ENCODE measurements at regions of chr12 and their contacts with region 1.

Region 1: DNA sequence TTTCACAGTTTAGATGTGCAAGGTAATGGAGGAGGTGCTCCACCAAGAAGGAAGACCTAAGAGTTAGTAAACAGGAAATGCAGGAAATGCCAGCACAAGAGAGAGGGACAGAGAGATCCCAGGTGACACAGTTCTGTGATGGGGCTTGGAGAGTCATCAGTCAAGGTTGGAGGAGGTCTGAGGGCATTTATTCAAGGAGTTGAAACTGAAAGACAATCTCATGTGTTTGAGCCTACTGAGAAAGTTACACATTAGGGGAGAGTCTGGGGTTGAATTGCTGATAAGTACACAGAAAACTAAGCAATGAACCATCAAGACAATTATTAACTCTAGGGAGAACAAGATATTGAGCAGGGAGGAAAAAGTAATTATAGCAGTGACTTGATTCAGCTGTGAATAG is 138.5 kb downstream of the ANO6 start:
- DNase-seq: no peak
- H3K4me3 ChIP-seq: no peak overlapping the region
- H3K27ac ChIP-seq: peak overlapping the region in 1 of 2 donors; percentile 15
- H3K4me1 ChIP-seq: peaks cover 6 to 37% of the 10 kb centered on the region in 2 donors
- H3K27me3 ChIP-seq: no peaks in the 10 kb centered on the region
- CTCF ChIP-seq: no peak

Region 2: DNA sequence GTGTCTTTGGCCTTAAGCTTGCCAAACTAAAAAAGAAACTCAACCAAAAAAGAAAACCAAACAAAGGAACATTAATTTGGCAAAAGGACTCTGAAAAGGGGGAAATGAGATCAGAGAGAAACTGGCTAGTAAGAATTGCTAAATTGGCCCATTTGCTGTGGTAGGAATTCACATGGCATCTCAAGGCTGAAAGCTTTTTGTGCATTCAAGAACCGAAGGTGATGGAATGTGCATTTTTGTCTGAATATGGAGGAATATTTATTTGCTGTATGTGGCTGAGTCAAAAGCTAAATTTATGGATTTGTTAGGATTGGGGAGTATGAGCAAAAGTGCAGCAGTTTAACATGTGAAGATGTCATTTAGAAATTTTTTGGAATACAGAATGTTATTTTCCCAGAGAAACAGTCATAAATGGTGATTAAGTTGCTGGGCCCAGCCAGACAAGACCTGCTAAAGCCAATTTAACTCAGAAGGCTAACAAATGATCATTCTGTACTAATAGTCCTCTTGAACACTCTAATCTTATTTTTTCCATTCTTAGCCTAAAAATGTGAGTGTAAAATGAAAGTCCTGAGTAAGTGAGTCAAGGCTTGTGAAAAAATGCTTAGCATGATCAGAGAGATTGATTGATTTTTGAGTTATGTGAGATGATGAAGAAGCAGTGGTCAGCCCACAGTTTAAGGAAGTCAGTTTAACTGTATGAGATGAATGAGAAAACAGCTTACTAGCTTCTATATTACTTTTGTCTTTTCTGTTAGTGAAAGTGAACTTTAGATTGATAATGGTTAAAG is 44.4 kb before region 1 on chr12:
- intact Hi-C with region 1: loop called (anchors 5 kb)
- DNase-seq: no peak
- H3K4me3 ChIP-seq: no peak overlapping the region
- H3K27ac ChIP-seq: peak overlapping the region; percentile 73 to 86
- H3K4me1 ChIP-seq: peaks cover 14 to 69% of the 10 kb centered on the region in 2 donors
- H3K27me3 ChIP-seq: no peaks in the 10 kb centered on the region
- CTCF ChIP-seq: peak in 2 of 3 experiments; percentile 6 to 27

Measured in ascending aorta (tissue), 2 donors.